HepG2 (cell line): ENCODE measurements at regions of chr6 and their contacts with region 1.

Region 1: GRCh38 chr6:167119670-167120381 is 3.1 kb upstream of the CCR6 start:
- DNase-seq: no peak
- ATAC-seq: no peak
- H3K4me3 ChIP-seq: no peak overlapping the region
- H3K27ac ChIP-seq: no peak overlapping the region
- H3K4me1 ChIP-seq: peaks cover 68% of the 10 kb centered on the region
- H3K27me3 ChIP-seq: peaks cover 0 to 14% of the 10 kb centered on the region in 2 experiments; a peak in 3 of 5 replicates
- CTCF ChIP-seq: peak; percentile 70
- EP300 ChIP-seq: no peak
- POLR2A ChIP-seq: no peak
- RAD21 ChIP-seq: peak; percentile 71

Region 2: DNA sequence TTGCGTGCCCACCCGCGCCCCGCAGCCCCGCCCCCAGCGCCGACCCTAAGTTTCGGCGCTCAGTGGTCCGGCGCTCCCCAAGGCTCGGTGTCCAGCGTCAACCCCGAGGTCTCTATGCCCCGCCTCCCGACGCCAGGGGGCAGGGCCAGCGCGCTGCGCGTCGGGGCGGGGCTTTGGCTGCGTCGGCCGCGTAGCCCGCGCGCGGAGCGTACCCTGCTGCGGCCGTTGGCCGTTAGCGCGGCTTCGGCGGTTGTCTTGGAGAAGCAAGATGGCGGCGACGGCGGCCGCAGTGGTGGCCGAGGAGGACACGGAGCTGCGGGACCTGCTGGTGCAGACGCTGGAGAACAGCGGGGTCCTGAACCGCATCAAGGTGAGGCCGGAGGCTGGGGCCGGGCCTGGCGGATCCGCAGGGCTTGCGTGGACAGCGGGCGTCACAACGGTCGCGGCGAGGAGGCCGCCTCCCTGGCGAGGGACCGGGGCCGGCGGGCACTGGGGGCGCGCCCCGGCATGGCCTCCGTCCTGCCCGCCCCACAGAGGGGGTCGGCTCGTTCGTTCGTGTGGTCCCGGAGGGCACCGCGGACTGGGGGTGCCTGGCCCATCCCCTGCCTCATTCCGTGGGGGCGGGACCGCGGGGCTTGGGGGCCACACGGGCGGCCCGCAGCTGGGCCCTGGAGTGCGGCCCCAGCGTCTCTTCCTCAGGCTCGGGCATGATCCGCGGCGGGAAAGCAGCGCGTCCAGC is 120.5 kb before region 1 on chr6 and contains the start of gene CEP43:
- CTCF ChIA-PET with region 1: no interaction called
- POLR2A ChIA-PET with region 1: interaction called, 3 read pairs
- in situ Hi-C with region 1: loop called (anchors 25 kb)
- intact Hi-C with region 1: loop called (anchors 1 kb)
- DNase-seq: peak; percentile 95
- ATAC-seq: peak; percentile 92
- H3K4me3 ChIP-seq: peak within 1 kb of the TSS; percentile 91 to 99 (median 97)
- H3K27ac ChIP-seq: peak within 1 kb of the TSS; percentile 82
- H3K4me1 ChIP-seq: peaks cover 54% of the 10 kb centered on the region
- H3K27me3 ChIP-seq: no peaks in the 10 kb centered on the region; a peak in 1 of 5 replicates
- CTCF ChIP-seq: peak; percentile 6; the same call in 1 of the 2 replicates
- EP300 ChIP-seq: peak in 1 of 2 experiments; percentile 25; a peak in 1 of 4 replicates
- POLR2A ChIP-seq: peak; percentile 79 to 83; a peak in 3 of 4 replicates
- RAD21 ChIP-seq: peak; percentile 59
- total RNA-seq, gene CEP43: 73.9 and 88.4 TPM in 2 replicates

Region 3: DNA sequence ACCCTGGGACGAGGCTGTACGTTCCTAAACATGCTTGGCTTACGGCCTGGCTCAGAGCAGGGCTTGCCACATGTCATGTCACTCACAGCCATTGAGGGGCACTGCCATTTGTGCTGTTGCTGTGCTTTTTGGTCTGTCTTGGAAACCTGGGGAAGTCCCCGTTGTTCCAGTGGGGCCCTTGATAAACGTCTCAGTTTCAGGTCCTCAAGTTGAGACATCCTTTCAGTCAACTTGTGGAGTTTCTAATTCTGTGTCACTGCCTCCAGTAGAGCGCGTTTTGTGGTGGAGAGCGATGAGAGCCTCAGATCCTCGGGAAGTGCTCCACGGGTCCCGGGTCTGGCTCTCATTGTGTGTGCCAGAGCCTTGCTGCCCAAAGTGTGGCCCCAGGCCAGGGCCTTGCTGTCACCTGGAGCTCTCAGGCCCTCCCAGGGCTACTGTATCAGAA is 40.0 kb before region 1 on chr6:
- CTCF ChIA-PET with region 1: no interaction called
- POLR2A ChIA-PET with region 1: no interaction called
- in situ Hi-C with region 1: no loop called
- intact Hi-C with region 1: loop called (anchors 5 kb)
- DNase-seq: no peak
- ATAC-seq: peak; percentile 35
- H3K4me3 ChIP-seq: no peak overlapping the region
- H3K27ac ChIP-seq: no peak overlapping the region
- H3K4me1 ChIP-seq: peaks cover 27% of the 10 kb centered on the region
- H3K27me3 ChIP-seq: peaks cover 0 to 2% of the 10 kb centered on the region in 2 experiments; a peak in 1 of 5 replicates
- CTCF ChIP-seq: peak; percentile 34; the same call in 1 of the 2 replicates
- EP300 ChIP-seq: no peak
- POLR2A ChIP-seq: no peak
- RAD21 ChIP-seq: no peak